ENCODE measurements at regions of chr12 and their contacts with region 1.

Region 1: DNA sequence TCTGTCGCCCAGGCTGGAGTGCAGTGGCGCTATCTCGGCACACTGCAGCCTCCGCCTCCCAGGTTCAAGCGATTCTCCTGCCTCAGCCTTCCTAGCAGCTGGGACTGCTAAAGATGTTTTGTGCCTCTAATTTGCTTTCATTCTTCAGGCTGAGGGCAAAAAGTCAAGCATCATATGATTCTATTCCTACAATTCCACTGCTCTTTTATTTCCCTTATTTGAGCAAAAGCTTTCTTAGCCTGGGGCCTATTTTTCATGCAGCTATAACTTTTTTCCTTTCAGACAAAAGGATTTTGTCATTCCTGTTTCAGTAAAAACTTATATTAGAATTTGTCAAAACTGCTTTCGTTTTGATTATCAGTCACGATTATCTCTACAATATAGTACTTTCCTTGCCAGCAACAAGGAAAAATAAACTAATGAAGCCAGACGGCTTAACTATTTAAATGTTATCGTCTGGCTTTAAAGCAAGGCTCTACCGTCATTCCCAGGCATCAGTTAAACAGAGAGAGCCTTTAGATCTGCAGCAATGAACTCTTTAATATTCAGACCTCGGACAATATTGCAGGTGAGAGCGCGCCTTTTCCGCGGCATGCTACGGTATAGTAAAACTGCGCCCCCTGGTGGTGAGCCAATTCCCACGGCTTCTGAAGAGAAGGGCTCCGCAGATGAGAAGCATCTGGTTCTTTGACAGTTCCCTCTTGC is 1.4 kb upstream of the SLC2A13 start:
- DNase-seq: peak; percentile 41 to 94
- H3K4me3 ChIP-seq: no peak overlapping the region
- H3K27ac ChIP-seq: no peak overlapping the region
- H3K4me1 ChIP-seq: peaks cover 2 to 12% (median 4%) of the 10 kb centered on the region in 4 experiments
- H3K27me3 ChIP-seq: peaks cover 0 to 7% (median 6%) of the 10 kb centered on the region in 4 experiments; a peak in 6 of 7 replicates
- CTCF ChIP-seq: peak; percentile 72 to 87 (median 82)
- EP300 ChIP-seq: no peak
- POLR2A ChIP-seq: no peak
- RAD21 ChIP-seq: peak; percentile 77 to 84

Region 2: DNA sequence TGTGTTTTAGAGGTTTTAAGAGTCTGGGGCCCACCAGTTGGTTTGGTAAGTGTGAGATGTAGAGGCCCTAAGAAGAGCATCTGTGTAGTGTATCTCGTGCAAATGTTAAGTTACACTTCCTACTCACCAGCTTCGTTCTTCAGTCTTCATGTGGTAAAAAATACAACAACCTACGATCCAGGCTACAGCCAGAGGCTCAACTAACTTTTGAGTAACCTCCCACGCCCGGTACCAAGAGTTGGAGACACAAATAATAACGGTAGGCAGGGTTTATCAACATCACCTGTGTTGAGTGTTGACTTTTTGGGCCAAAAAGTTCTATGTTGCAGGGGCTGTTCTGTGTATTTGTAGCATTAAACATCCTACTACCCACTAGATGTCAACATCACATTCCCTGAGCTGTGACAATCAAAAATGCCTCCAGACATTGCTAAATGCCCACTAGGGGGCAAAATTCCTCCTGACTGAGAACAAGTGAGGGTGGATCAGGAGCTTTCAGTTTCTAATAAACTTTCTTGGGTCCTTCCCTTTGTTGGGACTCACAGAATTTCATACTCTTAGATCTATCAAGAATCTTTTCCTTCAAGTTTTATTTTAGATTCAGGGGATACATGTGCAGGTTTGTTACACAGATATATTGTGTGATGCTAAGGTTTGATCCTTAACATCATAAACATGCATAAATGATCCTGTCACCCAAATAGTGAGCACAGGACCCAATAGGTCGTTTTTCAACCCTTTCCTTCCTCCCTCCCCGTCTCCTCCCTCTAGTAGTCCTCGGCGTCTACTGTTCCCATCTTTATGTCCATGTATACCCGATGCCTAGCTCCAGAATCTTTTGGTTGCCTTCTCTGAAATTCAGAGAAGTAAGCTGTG is 96.1 kb before region 1 on chr12:
- CTCF ChIA-PET with region 1: interaction called, 41 read pairs
- POLR2A ChIA-PET with region 1: interaction called, 4 read pairs
- DNase-seq: no peak
- H3K4me3 ChIP-seq: no peak overlapping the region
- H3K27ac ChIP-seq: no peak overlapping the region
- H3K4me1 ChIP-seq: peaks cover 0 to 9% (median 2%) of the 10 kb centered on the region in 4 experiments; a peak in 2 of 7 replicates
- H3K27me3 ChIP-seq: no peaks in the 10 kb centered on the region
- CTCF ChIP-seq: peak in 2 of 3 experiments; percentile 71 to 91; a peak in 3 of 4 replicates
- EP300 ChIP-seq: no peak
- POLR2A ChIP-seq: no peak
- RAD21 ChIP-seq: peak; percentile 65 to 79

Region 3: DNA sequence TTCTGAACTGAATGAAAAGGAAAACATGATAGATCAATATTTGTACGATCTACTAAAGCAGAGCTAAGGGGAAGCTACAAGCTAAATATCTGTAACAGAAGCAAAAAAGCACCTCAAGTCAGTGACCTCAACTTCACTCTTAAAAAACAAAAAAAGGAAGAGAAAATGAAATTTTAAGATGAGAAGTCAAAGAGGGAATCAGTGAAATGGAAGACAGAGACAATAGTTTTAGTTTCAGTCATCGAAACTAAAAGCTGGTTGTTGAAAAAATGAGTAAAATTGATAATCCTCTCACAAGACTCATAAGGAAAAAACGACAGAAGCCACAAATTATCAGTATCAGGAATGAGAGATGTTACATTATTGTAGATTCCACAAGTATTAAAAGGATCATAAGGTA is 10.6 kb after region 1 on chr12:
- CTCF ChIA-PET with region 1: interaction called, 13 read pairs
- POLR2A ChIA-PET with region 1: no interaction called
- DNase-seq: no peak
- H3K4me3 ChIP-seq: no peak overlapping the region
- H3K27ac ChIP-seq: no peak overlapping the region
- H3K4me1 ChIP-seq: no peaks in the 10 kb centered on the region
- H3K27me3 ChIP-seq: no peaks in the 10 kb centered on the region
- CTCF ChIP-seq: no peak
- EP300 ChIP-seq: no peak
- POLR2A ChIP-seq: no peak
- RAD21 ChIP-seq: no peak

Measured in H1 (cell line).